Mammary epithelial cell (primary cell): ENCODE measurements at regions of chr11 and their contacts with region 1.

Region 1: DNA sequence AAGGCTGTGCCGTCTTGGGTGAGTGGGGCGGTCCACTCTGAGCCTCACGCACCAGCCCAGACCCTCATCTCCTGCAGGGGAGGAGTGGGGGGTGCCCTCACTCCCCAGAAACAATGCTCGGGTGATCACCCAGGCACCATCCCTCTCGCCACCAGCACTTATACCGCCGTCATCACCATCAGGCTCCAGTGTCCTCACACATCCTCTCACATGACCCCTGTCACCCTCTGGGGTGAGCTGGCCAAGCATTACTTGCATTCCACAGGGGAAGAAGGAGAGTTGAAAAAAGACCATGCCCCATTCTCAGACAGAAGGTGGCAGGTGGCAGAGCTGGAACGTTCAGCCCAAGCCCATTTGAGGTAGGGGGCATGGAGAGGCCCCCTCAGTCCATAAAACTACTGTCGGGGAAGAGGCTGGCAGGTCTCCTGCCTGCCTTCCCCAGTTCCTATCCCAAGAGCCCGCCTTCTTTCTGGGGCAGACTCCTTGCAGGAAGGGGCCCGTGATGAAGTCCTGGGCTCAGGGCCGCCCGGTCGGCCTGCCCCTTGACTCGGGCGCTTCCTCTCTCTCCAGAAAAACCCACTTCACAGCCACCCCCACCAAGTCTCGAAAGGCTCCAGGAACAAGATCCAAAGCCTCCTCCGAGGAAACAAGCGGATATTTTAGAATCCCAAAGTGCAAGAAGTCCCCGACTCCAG is 153.3 kb downstream of the DSCAML1 start:
- DNase-seq: no peak
- H3K4me3 ChIP-seq: no peak overlapping the region
- H3K27ac ChIP-seq: no peak overlapping the region
- H3K4me1 ChIP-seq: no peaks in the 10 kb centered on the region
- H3K27me3 ChIP-seq: no peaks in the 10 kb centered on the region
- CTCF ChIP-seq: no peak

Region 2: GRCh38 chr11:117560780-117561530 is 82.8 kb before region 1 on chr11:
- CTCF ChIA-PET with region 1: no interaction called
- dilution Hi-C with region 1: loop called (anchors 5 kb)
- in situ Hi-C with region 1: no loop called
- intact Hi-C with region 1: no loop called
- DNase-seq: no peak
- H3K4me3 ChIP-seq: no peak overlapping the region
- H3K27ac ChIP-seq: no peak overlapping the region
- H3K4me1 ChIP-seq: no peaks in the 10 kb centered on the region
- H3K27me3 ChIP-seq: no peaks in the 10 kb centered on the region
- CTCF ChIP-seq: no peak

Region 3: GRCh38 chr11:117717485-117718314 is 73.9 kb after region 1 on chr11:
- CTCF ChIA-PET with region 1: no interaction called
- dilution Hi-C with region 1: loop called (anchors 5 kb)
- in situ Hi-C with region 1: no loop called
- intact Hi-C with region 1: no loop called
- DNase-seq: no peak
- H3K4me3 ChIP-seq: no peak overlapping the region
- H3K27ac ChIP-seq: no peak overlapping the region
- H3K4me1 ChIP-seq: no peaks in the 10 kb centered on the region
- H3K27me3 ChIP-seq: no peaks in the 10 kb centered on the region
- CTCF ChIP-seq: no peak